Activated CD8-positive, alpha-beta T cell treated with anti-CD3 and anti-CD28 coated beads for 36 hours (primary cell): ENCODE measurements at regions of chr15 and their contacts with region 1.

Region 1: GRCh38 chr15:63497642-63498467 is 6.5 kb upstream of the USP3 start:
- DNase-seq: peak; percentile 82
- ATAC-seq: peak; percentile 60
- H3K4me3 Mint-ChIP-seq: no peak overlapping the region
- H3K27ac Mint-ChIP-seq: no peak overlapping the region
- H3K4me1 Mint-ChIP-seq: peaks cover 75% of the 10 kb centered on the region
- H3K27me3 Mint-ChIP-seq: no peaks in the 10 kb centered on the region
- CTCF ChIP-seq: no peak

Region 2: GRCh38 chr15:63374686-63375520 is 123.0 kb before region 1 on chr15:
- CTCF ChIA-PET with region 1: no interaction called
- POLR2A ChIA-PET with region 1: no interaction called
- intact Hi-C with region 1: no loop called
- DNase-seq: peak; percentile 65
- ATAC-seq: peak; percentile 38
- H3K4me3 Mint-ChIP-seq: no peak overlapping the region
- H3K27ac Mint-ChIP-seq: no peak overlapping the region
- H3K4me1 Mint-ChIP-seq: peaks cover 38% of the 10 kb centered on the region
- H3K27me3 Mint-ChIP-seq: peaks cover 19% of the 10 kb centered on the region
- CTCF ChIP-seq: no peak

Region 3: GRCh38 chr15:63473999-63474809 is 23.7 kb before region 1 on chr15:
- CTCF ChIA-PET with region 1: interaction called, 53 read pairs
- POLR2A ChIA-PET with region 1: interaction called, 17 read pairs
- intact Hi-C with region 1: loop called (anchors 5 kb)
- DNase-seq: peak; percentile 82
- ATAC-seq: peak; percentile 77
- H3K4me3 Mint-ChIP-seq: peak overlapping the region; percentile 34
- H3K27ac Mint-ChIP-seq: peak overlapping the region; percentile 92
- H3K4me1 Mint-ChIP-seq: peaks cover 52% of the 10 kb centered on the region
- H3K27me3 Mint-ChIP-seq: no peaks in the 10 kb centered on the region
- CTCF ChIP-seq: no peak

Region 4: DNA sequence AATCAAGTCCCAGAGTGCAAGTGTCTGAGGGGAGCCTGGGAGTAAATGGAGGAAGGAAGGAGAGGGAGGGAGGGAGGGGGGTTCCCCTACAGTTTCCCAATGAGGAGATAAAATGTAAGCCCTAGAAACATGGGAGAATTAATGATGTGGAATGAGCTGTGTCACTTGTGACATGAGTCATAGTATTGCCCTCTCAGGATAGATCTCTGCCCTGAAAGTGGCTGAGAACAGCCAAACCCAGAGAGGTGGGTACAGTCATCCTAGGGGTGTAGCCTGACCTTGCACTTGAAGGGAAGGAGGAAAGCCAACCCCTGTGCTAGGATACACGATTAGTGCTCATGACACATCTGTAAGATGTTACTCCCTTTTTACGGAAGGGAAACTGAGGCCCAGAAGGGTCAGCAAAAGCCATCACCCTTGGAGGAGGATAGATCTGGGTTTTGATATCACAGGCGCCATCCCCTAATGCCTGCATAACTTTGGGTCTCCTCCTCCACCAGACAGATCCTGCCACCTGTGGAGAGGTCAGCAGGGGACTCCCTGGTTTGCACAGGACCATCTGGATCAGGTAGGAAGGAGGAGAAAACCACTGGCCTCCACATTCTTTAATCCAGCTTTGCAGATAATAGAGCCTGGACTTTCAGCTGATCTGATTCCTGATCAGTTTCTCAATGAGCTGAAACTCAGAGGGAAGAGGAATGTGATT is 16.6 kb before region 1 on chr15:
- CTCF ChIA-PET with region 1: interaction called, 53 read pairs
- POLR2A ChIA-PET with region 1: interaction called, 34 read pairs
- intact Hi-C with region 1: no loop called
- DNase-seq: peak; percentile 50
- ATAC-seq: peak; percentile 63
- H3K4me3 Mint-ChIP-seq: no peak overlapping the region
- H3K27ac Mint-ChIP-seq: peak overlapping the region; percentile 65
- H3K4me1 Mint-ChIP-seq: peaks cover 68% of the 10 kb centered on the region
- H3K27me3 Mint-ChIP-seq: no peaks in the 10 kb centered on the region
- CTCF ChIP-seq: no peak

Region 5: GRCh38 chr15:63600616-63601025 is 102.8 kb after region 1 on chr15:
- CTCF ChIA-PET with region 1: interaction called, 8 read pairs
- POLR2A ChIA-PET with region 1: interaction called, 12 read pairs
- intact Hi-C with region 1: no loop called
- DNase-seq: peak; percentile 93
- ATAC-seq: peak; percentile 76
- H3K4me3 Mint-ChIP-seq: peak overlapping the region; percentile 87
- H3K27ac Mint-ChIP-seq: peak overlapping the region; percentile 96
- H3K4me1 Mint-ChIP-seq: peaks cover 52% of the 10 kb centered on the region
- H3K27me3 Mint-ChIP-seq: no peaks in the 10 kb centered on the region
- CTCF ChIP-seq: no peak

Region 6: DNA sequence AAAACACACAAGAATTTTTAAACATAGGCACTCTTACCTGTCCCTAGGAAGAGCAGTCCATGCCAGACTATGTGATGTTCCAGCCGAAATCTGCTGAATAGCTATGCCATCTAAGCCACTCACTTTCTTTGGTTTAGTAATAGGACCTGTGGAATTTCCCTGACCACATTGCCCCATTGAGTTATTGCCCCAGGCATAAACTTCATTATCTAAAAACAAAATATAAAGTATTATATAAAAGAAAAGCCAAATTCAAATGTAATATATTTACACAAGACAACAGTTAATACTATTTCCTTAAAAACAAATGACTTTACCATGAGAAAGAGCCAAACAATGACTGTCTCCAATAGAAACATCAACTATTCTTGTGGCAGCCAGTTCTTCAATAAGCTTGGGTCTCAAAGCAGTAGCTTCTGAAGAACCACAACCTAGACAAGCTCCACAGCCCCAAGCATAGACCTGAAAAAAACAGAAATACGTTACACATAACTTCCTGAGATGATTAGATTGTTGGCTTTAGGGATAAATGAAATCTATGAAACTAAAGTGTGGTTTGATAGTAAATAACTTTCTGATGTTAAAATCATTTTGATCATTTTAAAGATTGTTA is 251.6 kb after region 1 on chr15:
- CTCF ChIA-PET with region 1: no interaction called
- POLR2A ChIA-PET with region 1: no interaction called
- intact Hi-C with region 1: no loop called
- DNase-seq: no peak
- ATAC-seq: no peak
- H3K4me3 Mint-ChIP-seq: no peak overlapping the region
- H3K27ac Mint-ChIP-seq: no peak overlapping the region
- H3K4me1 Mint-ChIP-seq: peaks cover 6% of the 10 kb centered on the region
- H3K27me3 Mint-ChIP-seq: no peaks in the 10 kb centered on the region
- CTCF ChIP-seq: no peak

Region 7: DNA sequence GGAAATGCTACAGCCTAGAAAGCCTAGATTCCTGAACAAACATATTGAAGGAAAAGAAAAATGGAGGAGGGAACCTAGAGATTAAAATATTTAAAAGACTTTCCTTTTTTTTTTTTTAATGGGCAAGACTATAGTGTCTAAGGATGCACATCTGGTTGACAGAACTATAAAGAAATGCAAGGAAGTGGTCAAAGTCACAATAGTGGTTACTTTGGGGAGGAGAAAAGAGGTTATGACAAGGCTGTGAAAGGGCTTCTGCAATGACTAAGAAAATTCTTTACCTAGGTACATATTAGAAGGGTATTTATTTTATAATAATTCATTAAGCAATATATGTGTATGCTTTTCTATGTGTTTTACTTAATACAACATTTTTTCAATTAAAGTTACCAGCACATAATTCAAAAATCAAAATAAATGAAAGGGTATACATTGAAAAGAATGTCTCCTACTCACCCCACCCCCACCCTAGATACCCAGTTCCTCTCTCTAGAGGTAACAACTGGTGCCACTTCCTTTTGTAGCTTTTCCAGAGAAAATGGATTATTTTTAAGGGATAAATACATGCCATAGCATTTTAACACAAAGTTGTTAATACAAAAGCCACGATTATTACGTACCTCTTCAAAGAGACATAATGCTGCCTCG is 265.7 kb after region 1 on chr15:
- CTCF ChIA-PET with region 1: no interaction called
- POLR2A ChIA-PET with region 1: no interaction called
- intact Hi-C with region 1: no loop called
- DNase-seq: no peak
- ATAC-seq: peak; percentile 96
- H3K4me3 Mint-ChIP-seq: no peak overlapping the region
- H3K27ac Mint-ChIP-seq: peak overlapping the region; percentile 46
- H3K4me1 Mint-ChIP-seq: peaks cover 58% of the 10 kb centered on the region
- H3K27me3 Mint-ChIP-seq: no peaks in the 10 kb centered on the region
- CTCF ChIP-seq: no peak